ENCODE measurements at regions of chr15 and their contacts with region 1.

Region 1: GRCh38 chr15:46312133-46312740 is 677.4 kb downstream of the SQOR start:
- DNase-seq: peak; percentile 80
- H3K4me3 ChIP-seq: no peak overlapping the region
- H3K27ac ChIP-seq: no peak overlapping the region
- H3K4me1 ChIP-seq: no peaks in the 10 kb centered on the region
- H3K27me3 ChIP-seq: no peaks in the 10 kb centered on the region
- CTCF ChIP-seq: peak; percentile 91

Region 2: DNA sequence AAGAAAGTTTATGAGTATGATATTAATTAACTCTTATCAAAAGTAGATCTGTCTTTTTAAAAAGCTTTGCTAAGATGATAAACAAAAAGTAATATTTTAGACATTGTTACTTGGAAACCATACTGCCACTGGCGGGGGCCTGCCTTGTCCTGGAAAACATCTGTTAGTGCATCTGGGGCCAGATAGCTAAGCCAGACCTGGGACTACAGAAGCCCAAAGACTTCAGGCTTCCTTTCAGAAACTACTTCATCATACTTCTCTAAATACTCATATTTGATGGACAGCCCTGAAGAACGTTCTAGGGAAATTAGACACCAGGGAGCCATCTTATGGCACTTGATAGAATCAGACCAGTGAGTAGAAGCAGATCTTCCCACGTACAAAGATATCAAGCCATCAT is 609.7 kb after region 1 on chr15:
- intact Hi-C with region 1: loop called (anchors 10 kb)
- DNase-seq: no peak
- H3K4me3 ChIP-seq: no peak overlapping the region
- H3K27ac ChIP-seq: no peak overlapping the region
- H3K4me1 ChIP-seq: no peaks in the 10 kb centered on the region
- H3K27me3 ChIP-seq: no peaks in the 10 kb centered on the region
- CTCF ChIP-seq: no peak

Region 3: DNA sequence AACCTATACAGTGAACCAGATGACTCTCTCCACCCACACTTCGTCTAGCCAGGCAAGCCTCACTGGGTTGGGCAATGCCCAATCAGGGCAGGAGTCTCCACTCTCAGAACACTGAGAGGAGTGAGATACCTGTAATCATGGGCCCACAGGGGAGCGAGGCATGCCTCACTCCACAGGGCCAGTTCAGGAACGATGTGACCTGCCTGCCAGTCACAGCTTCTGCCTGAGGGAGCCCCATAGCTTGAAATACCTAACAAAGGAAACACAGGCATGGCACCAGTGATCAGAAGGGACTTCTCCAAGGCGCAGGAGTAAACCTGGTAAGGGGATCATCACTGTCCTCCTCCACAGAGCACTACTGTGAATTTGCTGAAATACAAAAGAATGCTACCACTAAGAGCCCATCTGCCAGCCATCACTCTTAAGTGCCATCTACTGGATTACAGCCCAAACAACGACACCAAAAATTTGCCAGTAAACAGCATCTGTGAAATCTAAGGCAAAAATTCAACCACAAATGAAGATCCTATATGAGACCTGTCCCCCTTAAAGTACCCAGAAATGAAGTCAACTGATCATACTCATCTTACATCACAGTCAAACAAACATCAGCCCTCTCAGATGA is 715.2 kb after region 1 on chr15:
- intact Hi-C with region 1: loop called (anchors 5 kb)
- DNase-seq: no peak
- H3K4me3 ChIP-seq: no peak overlapping the region
- H3K27ac ChIP-seq: no peak overlapping the region
- H3K4me1 ChIP-seq: no peaks in the 10 kb centered on the region
- H3K27me3 ChIP-seq: no peaks in the 10 kb centered on the region
- CTCF ChIP-seq: no peak

Measured in colonic mucosa (tissue), 4 donors.